Activated B cell treated with CpG ODN at 0.5 μM for 24 hours (primary cell): ENCODE measurements at regions of chr5 and their contacts with region 1.

Region 1: GRCh38 chr5:62779010-62779422 is 200.4 kb downstream of the LRRC70 start:
- DNase-seq: no peak
- ATAC-seq: no peak
- H3K4me3 Mint-ChIP-seq: no peak overlapping the region
- H3K27ac Mint-ChIP-seq: no peak overlapping the region
- H3K4me1 Mint-ChIP-seq: peaks cover 2% of the 10 kb centered on the region
- H3K27me3 Mint-ChIP-seq: no peaks in the 10 kb centered on the region
- CTCF ChIP-seq: no peak

Region 2: DNA sequence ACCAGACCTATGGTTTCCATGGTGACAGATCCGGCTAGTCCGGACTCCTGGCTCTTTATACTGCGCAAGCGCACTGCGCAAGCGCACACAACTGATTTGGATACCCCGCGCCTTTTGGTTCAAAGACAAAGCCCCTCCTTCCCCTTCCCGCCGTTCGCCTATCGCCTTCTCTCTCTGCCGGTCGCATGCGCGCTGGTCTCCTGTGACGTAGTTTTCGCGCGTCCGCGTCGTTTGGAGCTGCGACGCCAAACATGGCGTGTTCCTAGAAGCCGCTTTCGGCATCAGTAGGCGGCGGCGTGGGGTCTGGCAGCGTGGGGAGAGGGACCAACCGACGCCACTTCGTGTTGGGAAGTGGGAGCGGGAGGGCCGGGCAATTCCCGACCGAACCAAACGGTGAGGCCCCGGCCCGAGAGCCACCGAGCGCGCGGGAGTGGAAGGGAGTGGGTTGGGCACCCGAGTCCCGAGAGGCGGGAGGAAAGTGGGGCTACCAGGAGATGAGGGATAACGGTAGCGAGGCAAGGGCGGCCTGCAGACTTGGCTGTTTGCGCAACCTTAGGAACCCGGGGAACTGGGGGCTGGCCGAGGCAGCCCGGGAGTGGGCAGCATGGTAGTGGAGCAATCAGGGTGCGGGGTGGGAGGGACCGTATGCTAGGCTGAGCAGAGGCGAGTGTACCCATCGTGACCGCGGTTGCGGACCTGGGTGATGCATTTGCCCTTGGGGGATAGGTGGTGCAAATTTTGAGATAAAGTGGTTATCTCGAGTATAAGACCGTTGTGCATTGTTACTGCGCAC is 366.3 kb before region 1 on chr5 and contains the start of gene IPO11:
- CTCF ChIA-PET with region 1: no interaction called
- POLR2A ChIA-PET with region 1: no interaction called
- intact Hi-C with region 1: loop called (anchors 1 kb)
- DNase-seq: peak; percentile 99
- ATAC-seq: peak; percentile 94
- H3K4me3 Mint-ChIP-seq: peak within 1 kb of the TSS; percentile 92
- H3K27ac Mint-ChIP-seq: peak within 1 kb of the TSS; percentile 87
- H3K4me1 Mint-ChIP-seq: peaks cover 20% of the 10 kb centered on the region
- H3K27me3 Mint-ChIP-seq: no peaks in the 10 kb centered on the region
- CTCF ChIP-seq: no peak
- total RNA-seq, gene IPO11: 32.9 and 34.7 TPM in 2 replicates

Region 3: GRCh38 chr5:62448528-62448927 is 330.5 kb before region 1 on chr5:
- CTCF ChIA-PET with region 1: interaction called, 7 read pairs
- POLR2A ChIA-PET with region 1: no interaction called
- intact Hi-C with region 1: loop called (anchors 1 kb)
- DNase-seq: no peak
- ATAC-seq: no peak
- H3K4me3 Mint-ChIP-seq: no peak overlapping the region
- H3K27ac Mint-ChIP-seq: no peak overlapping the region
- H3K4me1 Mint-ChIP-seq: no peaks in the 10 kb centered on the region
- H3K27me3 Mint-ChIP-seq: no peaks in the 10 kb centered on the region
- CTCF ChIP-seq: no peak

Region 4: GRCh38 chr5:62460578-62460983 is 318.4 kb before region 1 on chr5:
- CTCF ChIA-PET with region 1: interaction called, 14 read pairs
- POLR2A ChIA-PET with region 1: no interaction called
- intact Hi-C with region 1: loop called (anchors 1 kb)
- DNase-seq: no peak
- ATAC-seq: peak; percentile 31
- H3K4me3 Mint-ChIP-seq: no peak overlapping the region
- H3K27ac Mint-ChIP-seq: no peak overlapping the region
- H3K4me1 Mint-ChIP-seq: peaks cover 2% of the 10 kb centered on the region
- H3K27me3 Mint-ChIP-seq: no peaks in the 10 kb centered on the region
- CTCF ChIP-seq: no peak

Region 5: DNA sequence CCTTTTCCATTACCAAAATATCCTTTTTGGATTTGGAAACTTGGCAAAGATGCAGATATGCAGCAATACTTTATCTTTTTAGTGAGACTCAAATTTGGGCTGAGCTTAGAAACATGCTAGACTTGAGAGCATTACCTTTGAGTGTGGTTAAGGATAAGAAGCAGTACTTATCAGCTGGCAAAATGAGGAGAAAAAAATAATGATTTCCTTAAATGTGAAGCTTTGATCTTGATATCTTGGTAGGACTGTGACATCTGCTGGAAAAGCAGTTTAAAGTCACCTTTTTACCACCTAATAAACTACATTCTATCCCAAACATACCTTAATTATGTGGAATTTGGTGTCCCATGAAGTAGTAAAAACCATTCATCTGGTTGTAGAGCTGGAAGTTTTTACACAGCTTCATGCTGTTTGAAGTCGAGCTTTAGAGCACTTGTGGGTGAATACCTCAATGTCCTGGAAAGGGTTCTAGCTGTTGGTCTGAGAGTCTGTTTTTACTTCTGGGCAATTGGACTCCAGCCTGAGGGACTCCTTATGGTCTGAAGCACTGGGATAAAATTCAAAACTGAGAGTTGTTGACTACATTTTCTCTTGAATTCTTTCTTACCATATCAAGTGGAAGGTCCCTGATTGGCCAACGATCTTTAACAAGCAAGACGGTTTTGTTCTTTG is 147.0 kb before region 1 on chr5:
- CTCF ChIA-PET with region 1: no interaction called
- POLR2A ChIA-PET with region 1: no interaction called
- intact Hi-C with region 1: no loop called
- DNase-seq: no peak
- ATAC-seq: no peak
- H3K4me3 Mint-ChIP-seq: no peak overlapping the region
- H3K27ac Mint-ChIP-seq: no peak overlapping the region
- H3K4me1 Mint-ChIP-seq: no peaks in the 10 kb centered on the region
- H3K27me3 Mint-ChIP-seq: no peaks in the 10 kb centered on the region
- CTCF ChIP-seq: no peak

Region 6: GRCh38 chr5:63011158-63011557 is 232.1 kb after region 1 on chr5:
- CTCF ChIA-PET with region 1: no interaction called
- POLR2A ChIA-PET with region 1: no interaction called
- intact Hi-C with region 1: no loop called
- DNase-seq: no peak
- ATAC-seq: no peak
- H3K4me3 Mint-ChIP-seq: no peak overlapping the region
- H3K27ac Mint-ChIP-seq: no peak overlapping the region
- H3K4me1 Mint-ChIP-seq: no peaks in the 10 kb centered on the region
- H3K27me3 Mint-ChIP-seq: no peaks in the 10 kb centered on the region
- CTCF ChIP-seq: no peak

Region 7: DNA sequence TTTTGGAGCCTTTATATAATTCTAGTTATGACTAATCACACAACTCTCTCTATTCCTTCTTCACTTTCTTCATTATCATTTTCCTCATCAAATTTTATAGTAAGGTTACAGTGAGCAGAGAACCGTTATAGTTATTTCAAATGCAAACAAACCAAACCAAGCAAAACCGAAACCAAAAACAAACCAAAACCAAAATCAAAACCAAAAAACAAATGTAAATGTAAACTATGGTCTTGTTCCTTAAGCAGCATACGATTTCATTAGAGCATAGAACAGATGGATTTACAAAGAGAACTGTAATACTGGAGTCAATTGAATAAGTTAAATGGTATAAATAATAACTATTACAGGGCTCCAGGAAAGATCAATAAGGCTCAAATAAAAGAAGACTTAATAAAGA is 246.7 kb after region 1 on chr5:
- CTCF ChIA-PET with region 1: no interaction called
- POLR2A ChIA-PET with region 1: no interaction called
- intact Hi-C with region 1: no loop called
- DNase-seq: no peak
- ATAC-seq: no peak
- H3K4me3 Mint-ChIP-seq: no peak overlapping the region
- H3K27ac Mint-ChIP-seq: no peak overlapping the region
- H3K4me1 Mint-ChIP-seq: no peaks in the 10 kb centered on the region
- H3K27me3 Mint-ChIP-seq: no peaks in the 10 kb centered on the region
- CTCF ChIP-seq: no peak